Right cardiac atrium (tissue), 5 donors: ENCODE measurements at regions of chr12 and their contacts with region 1.

Region 1: GRCh38 chr12:59444932-59445331 is 150.9 kb upstream of the SLC16A7 start:
- DNase-seq: no peak
- ATAC-seq: no peak
- H3K4me3 ChIP-seq: no peak overlapping the region
- H3K27ac ChIP-seq: no peak overlapping the region
- H3K4me1 ChIP-seq: no peaks in the 10 kb centered on the region
- H3K27me3 ChIP-seq: no peaks in the 10 kb centered on the region

Region 2: DNA sequence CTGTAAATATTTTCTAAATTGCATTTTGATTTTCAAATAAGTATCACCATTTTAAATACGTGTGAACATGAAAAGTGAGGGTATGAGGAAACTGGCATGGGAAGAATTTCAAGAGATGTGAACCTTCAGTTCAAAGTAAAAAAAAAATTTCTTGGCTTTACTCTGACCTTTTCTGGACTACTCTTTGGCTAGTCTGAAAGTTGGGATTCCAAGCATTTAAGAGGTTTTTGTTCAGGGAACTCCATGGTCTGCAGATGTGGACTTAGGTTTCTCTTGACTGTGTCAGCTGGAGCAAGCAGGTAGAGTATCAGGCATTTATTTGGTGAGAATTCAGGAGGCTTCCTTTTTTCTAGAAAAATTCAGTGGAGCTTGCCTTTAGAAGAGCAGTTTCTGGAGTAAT is 836.2 kb before region 1 on chr12:
- intact Hi-C with region 1: no loop called
- DNase-seq: no peak
- ATAC-seq: no peak
- H3K4me3 ChIP-seq: no peak overlapping the region
- H3K27ac ChIP-seq: no peak overlapping the region
- H3K4me1 ChIP-seq: no peaks in the 10 kb centered on the region
- H3K27me3 ChIP-seq: no peaks in the 10 kb centered on the region

Region 3: DNA sequence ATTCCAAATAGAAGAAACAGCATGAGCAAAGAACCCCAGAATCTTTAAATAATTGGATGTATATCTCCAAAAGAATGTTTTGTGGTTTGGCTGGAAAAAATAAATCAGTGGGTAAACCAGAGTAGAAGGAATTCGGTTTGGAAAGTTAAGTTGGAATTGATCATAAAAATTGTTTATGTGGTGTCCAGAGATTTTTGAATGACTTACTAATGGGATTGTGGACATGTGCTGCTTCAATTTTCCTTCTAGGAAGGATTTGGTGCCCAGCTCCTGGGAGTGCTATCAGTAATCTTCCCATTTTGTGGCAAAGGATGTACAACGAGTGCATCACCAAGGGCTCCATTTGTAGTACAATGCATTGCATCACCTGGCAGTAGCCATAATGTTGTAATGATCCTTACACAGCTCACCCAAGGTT is 375.7 kb after region 1 on chr12:
- intact Hi-C with region 1: loop called in 1 of 4 experiments (anchors 10 kb)
- DNase-seq: no peak
- ATAC-seq: no peak
- H3K4me3 ChIP-seq: no peak overlapping the region
- H3K27ac ChIP-seq: no peak overlapping the region
- H3K4me1 ChIP-seq: no peaks in the 10 kb centered on the region
- H3K27me3 ChIP-seq: no peaks in the 10 kb centered on the region